A549 (cell line): ENCODE measurements at regions of chr13 and their contacts with region 1.

Region 1: DNA sequence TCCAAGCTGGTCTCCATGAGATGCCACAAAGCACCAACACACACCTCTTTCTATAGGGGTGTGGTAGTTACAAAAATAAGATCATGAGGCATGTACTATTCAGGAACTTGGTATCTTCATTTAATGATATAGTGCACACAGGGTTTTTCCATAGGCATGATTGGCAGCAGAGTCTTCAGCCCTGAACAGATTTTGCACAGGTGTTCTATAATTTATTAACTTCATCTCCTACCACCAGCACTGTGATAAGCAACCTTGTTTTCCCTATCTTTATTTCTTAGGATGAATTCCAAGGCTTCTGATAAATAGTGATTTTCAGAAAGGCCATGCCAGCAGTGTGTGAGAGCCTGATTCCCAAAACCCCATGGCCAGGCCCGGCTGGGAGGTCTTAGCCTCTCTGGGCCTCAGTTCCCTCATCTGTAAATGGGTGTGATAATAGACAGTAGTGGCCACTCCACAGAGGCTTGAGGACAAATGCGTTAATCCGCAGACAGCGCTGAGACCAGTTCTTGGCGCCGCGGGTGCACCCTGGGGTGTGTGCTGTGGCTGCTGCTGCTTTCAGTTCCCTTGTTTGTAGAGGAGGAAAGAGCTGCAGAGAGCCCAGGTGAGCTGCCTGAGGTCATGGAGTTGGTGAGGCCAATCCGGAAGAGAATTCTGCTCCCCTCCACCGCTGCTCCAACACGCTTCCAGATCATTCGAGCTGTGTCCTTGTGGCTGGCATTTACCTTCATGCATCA is 33.1 kb downstream of the DHRS12 start:
- DNase-seq: no peak
- ATAC-seq: no peak; a peak in 1 of 6 replicates
- H3K4me3 ChIP-seq: no peak overlapping the region
- H3K27ac ChIP-seq: no peak overlapping the region; a peak in 1 of 6 replicates
- H3K4me1 ChIP-seq: no peaks in the 10 kb centered on the region
- CTCF ChIP-seq: no peak
- EP300 ChIP-seq: no peak
- POLR2A ChIP-seq: no peak
- RAD21 ChIP-seq: no peak

Region 2: DNA sequence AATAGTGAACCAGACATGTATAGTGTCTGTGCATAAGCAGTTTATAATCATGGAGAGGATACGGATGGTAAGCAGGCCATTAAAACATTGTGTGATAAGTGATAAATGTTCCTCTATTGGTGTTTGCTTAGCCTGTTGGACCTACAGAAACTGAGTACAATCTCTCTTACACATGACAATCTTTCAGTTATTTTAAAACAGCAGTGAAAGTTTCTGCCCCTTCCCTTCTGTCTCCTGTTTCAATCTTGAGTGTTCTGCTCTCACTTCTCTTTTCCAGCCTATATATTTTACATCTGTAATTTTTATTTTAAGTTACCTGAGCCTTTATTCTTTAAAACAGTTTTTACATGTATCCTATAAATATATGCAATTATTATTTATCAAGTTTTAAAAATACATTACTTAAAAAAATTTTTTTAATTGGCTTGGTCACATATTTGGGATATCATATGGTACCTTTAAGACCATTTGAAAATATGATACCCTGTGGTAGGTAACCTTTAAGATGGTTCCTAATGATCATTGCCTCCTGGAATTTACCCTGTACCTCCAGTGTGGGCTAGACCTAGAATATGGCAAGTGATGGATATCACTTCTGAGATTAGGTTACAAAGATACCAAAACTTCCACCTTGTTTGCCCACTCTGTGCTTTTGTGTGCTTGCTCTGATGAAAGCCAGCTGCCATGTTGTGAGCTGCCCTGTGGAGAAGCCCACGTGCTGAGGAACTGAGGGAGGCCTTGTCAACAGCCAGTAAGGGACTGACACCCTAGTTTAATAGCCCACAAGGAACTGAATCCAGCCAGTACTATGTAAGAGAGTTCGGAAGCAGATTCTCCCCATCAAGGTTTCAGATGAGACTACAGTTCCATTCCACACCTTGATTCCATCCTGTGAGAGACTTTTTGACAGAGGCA is 66.2 kb before region 1 on chr13:
- CTCF ChIA-PET with region 1: no interaction called
- POLR2A ChIA-PET with region 1: no interaction called
- DNase-seq: no peak
- ATAC-seq: no peak
- H3K4me3 ChIP-seq: no peak overlapping the region
- H3K27ac ChIP-seq: no peak overlapping the region
- H3K4me1 ChIP-seq: no peaks in the 10 kb centered on the region
- CTCF ChIP-seq: no peak
- EP300 ChIP-seq: no peak
- POLR2A ChIP-seq: no peak
- RAD21 ChIP-seq: no peak

Region 3: DNA sequence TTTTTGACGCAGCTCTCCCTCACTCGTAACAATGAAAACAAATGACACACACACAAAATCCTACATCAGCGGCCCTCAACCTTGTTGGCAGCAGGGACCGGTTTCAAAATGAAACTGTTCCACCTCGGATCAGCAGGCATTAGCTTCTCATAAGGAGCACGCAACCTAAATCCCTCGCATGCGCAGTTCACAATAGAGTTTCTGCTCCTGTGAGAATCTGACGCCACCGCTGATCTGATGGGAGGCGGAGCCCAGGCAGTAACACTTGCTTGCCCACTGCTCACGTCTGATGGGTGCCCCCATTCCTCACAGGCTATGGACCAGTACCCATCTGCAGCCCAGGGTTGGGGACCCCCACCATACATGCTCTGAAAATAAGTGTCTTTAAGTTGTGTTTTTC is 10.3 kb before region 1 on chr13:
- CTCF ChIA-PET with region 1: no interaction called
- POLR2A ChIA-PET with region 1: no interaction called
- DNase-seq: no peak
- ATAC-seq: no peak
- H3K4me3 ChIP-seq: no peak overlapping the region
- H3K27ac ChIP-seq: no peak overlapping the region
- H3K4me1 ChIP-seq: peaks cover 16% of the 10 kb centered on the region
- CTCF ChIP-seq: no peak
- EP300 ChIP-seq: no peak
- POLR2A ChIP-seq: no peak
- RAD21 ChIP-seq: no peak

Region 4: DNA sequence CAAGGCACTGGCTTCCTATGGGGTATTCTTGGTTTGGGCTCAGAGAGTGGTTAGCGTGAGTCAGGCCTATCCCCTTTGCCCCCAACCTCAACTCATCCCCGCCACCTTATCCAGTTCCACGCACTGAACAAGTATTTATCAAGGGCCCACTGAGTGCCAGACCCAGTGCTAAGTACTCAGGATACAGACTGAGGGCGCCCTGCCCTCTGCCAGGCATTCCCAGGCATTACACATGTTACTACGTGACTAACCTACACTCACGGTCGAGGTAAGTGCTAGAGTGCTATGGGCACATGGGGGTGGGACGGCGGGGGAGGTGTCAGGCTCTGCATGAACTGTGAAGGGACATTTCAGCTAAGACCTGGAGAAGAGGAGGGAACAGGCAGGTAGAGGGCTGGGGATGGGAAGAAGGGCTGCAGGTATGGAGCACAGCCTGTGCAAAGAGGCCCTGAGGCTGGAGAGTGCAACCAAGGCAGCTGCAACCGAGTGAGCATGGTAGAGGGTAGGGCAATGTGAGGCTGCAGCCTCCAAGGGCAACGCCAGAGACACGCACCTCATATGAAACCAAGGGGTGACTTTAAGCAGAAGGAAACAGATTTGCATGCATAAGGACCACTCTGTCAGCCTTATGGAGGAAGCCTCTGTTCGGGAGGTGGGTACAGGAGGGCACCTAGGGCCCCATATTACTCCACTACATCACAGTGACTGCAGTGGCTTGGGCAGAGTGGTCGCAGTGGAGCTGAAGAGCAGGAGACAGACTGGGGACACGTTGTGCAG is 10.6 kb after region 1 on chr13:
- CTCF ChIA-PET with region 1: interaction called, 12 read pairs
- POLR2A ChIA-PET with region 1: no interaction called
- DNase-seq: peak in 1 of 2 experiments; percentile 28
- ATAC-seq: peak; percentile 86 to 87
- H3K4me3 ChIP-seq: no peak overlapping the region
- H3K27ac ChIP-seq: no peak overlapping the region
- H3K4me1 ChIP-seq: no peaks in the 10 kb centered on the region
- CTCF ChIP-seq: no peak; the same call in 2 of the 3 replicates
- EP300 ChIP-seq: no peak
- POLR2A ChIP-seq: no peak
- RAD21 ChIP-seq: peak; percentile 44 to 53; a peak in 4 of 5 replicates

Region 5: GRCh38 chr13:51895906-51896888 is 125.3 kb after region 1 on chr13:
- CTCF ChIA-PET with region 1: no interaction called
- POLR2A ChIA-PET with region 1: no interaction called
- DNase-seq: peak; percentile 41 to 47
- ATAC-seq: peak; percentile 95 to 98
- H3K4me3 ChIP-seq: no peak overlapping the region
- H3K27ac ChIP-seq: no peak overlapping the region
- H3K4me1 ChIP-seq: no peaks in the 10 kb centered on the region
- CTCF ChIP-seq: peak; percentile 60
- EP300 ChIP-seq: no peak
- POLR2A ChIP-seq: no peak
- RAD21 ChIP-seq: peak; percentile 63 to 70